ENCODE measurements at regions of chr7 and their contacts with region 1.

Region 1: DNA sequence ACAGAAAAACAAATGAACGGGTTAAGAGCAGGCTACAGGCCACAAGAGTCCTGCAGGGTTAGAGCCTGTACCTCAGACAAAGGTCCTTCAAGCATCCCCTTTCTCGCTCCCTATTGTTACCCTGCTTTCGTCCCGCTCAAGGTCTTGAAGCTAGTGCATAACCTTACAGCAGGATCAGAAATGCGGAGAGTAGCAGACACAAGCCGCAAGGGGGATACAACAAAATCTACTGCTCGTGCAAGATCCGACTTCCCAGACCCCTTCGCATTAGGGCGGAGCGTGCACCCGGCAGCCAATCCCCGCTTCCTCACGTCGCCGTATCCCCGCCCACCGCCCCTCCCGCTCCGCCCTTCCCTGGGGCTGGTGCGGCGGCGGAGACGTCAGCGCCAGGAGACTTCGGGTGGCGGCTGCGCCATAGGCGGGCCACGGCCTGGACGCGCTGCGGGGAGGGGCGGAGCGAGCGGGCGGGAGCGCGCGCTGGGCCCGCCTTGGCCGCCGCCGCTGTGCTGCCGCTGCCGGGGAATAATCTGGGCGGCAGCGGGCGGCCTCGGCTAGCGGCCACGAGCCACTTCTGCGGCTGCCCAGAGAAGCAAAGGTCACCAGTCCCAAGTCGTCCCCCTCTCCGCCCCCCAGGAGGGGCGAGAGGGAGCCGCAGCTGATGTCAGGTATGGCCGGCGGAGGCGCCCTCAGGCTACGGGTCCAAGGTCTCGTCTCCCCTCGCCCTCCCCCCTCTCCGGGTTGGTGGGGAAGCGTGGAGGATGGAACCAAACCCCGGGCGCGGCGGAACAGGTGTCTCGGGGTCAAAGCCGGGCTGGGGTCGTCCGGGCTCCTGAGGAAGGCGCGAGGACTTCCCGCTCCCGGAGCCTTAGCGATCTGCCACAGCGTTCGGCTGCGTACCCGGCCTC is at the start of gene C1GALT1:
- DNase-seq: peak; percentile 93 to 99 (median 98)

Region 2: GRCh38 chr7:7014827-7015610 is 167.4 kb before region 1 on chr7:
- intact Hi-C with region 1: no loop called
- DNase-seq: peak in 2 of 42 donors; percentile 11 to 17

Region 3: GRCh38 chr7:7228472-7228871 is 46.1 kb after region 1 on chr7:
- intact Hi-C with region 1: loop called (anchors 5 kb)
- DNase-seq: peak in 1 of 42 donors; percentile 22

Region 4: DNA sequence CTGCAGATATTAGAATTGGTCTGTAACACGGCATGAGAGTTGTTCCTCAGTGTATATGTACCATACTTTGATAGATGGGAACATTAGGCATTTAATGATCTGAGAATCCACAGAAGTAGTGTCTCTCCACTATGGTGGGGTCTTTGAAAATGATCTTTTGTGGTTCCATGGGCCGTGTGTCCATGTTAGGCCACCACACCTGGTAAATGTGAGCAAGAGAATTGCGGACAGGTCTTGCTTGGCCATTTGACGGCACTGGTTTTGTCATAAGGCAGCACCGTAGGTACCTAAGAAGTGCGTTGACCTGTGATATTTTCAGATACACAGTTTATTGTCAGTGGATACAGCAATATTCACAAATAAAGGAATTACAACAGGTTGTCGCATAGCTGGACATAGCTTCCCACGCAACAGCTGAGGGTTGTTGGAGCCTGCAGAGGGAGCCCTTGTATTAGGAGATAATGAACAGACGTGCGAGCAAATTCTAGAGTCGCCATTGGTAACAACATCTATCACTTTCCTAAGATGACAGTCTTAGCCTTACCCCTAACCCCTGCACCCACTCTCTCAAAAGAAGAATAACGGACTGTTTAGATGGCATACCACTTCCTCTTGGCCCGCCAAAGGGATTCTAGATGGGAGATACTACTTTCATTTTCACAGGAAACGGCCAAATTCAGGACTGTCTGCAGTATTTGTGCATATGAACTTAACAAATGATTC is 241.9 kb after region 1 on chr7:
- intact Hi-C with region 1: loop called (anchors 10 kb)
- DNase-seq: peak; percentile 11 to 89 (median 66)

Region 5: DNA sequence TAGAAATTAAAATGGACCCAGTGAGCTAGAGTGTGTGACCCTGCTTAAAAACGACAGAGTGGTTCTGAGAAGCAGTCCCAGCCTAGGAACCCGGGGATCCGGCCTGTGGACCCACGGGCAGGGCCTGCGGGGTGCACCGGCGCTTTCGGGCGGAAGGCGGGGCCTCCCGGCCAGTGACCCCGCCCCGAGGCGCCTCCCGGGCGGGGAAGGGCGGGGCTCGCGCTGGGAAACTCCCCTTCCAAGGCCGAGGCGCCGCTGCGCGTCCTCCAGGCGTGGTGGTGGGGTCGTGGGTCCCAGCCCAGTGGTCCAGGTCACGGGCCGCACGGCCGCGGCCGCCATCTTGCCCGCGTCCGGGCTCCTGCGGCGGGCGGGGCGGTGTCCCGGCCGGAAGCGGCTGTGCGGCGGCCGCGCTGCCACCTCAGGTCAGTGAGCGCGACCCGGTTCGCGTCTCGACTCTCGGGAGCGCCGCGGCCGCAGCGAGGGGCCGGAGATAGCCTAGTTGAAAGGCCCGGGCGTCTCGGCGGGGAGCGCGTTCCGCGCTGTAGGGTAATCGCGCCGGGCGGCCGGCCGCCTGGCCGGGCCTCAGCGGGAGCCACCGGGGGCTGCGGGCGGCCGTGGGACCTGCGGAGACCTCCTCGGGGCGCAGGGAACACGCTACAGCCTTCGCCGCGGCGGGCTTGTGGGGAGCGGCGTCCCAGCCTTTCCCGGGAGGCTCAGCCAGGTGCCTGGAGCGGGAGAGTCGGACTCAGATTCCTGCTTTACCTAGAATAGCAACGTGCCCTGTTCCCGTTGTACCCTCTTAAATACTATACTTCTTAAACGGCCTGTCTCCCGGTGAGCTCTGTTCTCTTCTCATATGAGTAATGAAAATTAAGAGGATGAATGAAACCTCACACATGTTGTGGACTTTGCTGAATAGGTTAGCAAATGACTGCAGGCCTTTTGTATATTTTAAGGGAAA is 384.5 kb after region 1 on chr7 and contains the start of gene MIOS:
- intact Hi-C with region 1: loop called (anchors 10 kb)
- DNase-seq: peak; percentile 54 to 95 (median 88)

Measured in head of caudate nucleus (tissue), 42 donors.